ENCODE measurements at regions of chr12 and their contacts with region 1.

Region 1: GRCh38 chr12:10721651-10722501 is 1.2 kb downstream of the YBX3 start:
- DNase-seq: peak; percentile 98 to 99
- ATAC-seq: peak; percentile 69 to 72
- H3K4me3 ChIP-seq: peak overlapping the region; percentile 83 to 99 (median 88)
- H3K27ac ChIP-seq: peak overlapping the region; percentile 97 to 100 (median 98)
- H3K4me1 ChIP-seq: peaks cover 14 to 30% of the 10 kb centered on the region in 2 donors
- H3K27me3 ChIP-seq: no peaks in the 10 kb centered on the region
- CTCF ChIP-seq: no peak
- POLR2A ChIP-seq: peak; percentile 72 to 86

Region 2: GRCh38 chr12:10212201-10213131 is 509.4 kb before region 1 on chr12 and contains the start of gene GABARAPL1:
- in situ Hi-C with region 1: loop called in 3 of 4 experiments (anchors 5 to 25 kb)
- intact Hi-C with region 1: loop called (anchors 1 kb)
- DNase-seq: peak; percentile 97 to 99
- ATAC-seq: peak; percentile 85 to 86
- H3K4me3 ChIP-seq: peak within 1 kb of the TSS; percentile 75 to 96 (median 88)
- H3K27ac ChIP-seq: peak within 1 kb of the TSS; percentile 98 to 100 (median 98)
- H3K4me1 ChIP-seq: peaks cover 15 to 22% of the 10 kb centered on the region in 2 donors
- H3K27me3 ChIP-seq: no peaks in the 10 kb centered on the region
- CTCF ChIP-seq: no peak
- POLR2A ChIP-seq: peak; percentile 80 to 93
- total RNA-seq, gene GABARAPL1: 144 to 605 (median 175) TPM

Region 3: GRCh38 chr12:10613349-10614055 is 108.4 kb before region 1 on chr12 and contains the start of gene MAGOHB:
- in situ Hi-C with region 1: no loop called
- intact Hi-C with region 1: loop called (anchors 10 kb)
- DNase-seq: peak; percentile 82 to 93
- ATAC-seq: peak; percentile 98 to 99
- H3K4me3 ChIP-seq: peak within 1 kb of the TSS; percentile 68 to 89 (median 79)
- H3K27ac ChIP-seq: peak within 1 kb of the TSS; percentile 90 to 91 (median 90)
- H3K4me1 ChIP-seq: peaks cover 12 to 16% of the 10 kb centered on the region in 2 donors
- H3K27me3 ChIP-seq: no peaks in the 10 kb centered on the region
- CTCF ChIP-seq: peak in 2 of 5 experiments; percentile 49 to 52
- POLR2A ChIP-seq: peak; percentile 51 to 82
- total RNA-seq, gene MAGOHB: 0.80 to 6.3 (median 3.8) TPM

Region 4: GRCh38 chr12:10968765-10969456 is 247.0 kb after region 1 on chr12:
- in situ Hi-C with region 1: no loop called
- intact Hi-C with region 1: no loop called
- DNase-seq: peak in 1 of 2 donors; percentile 16
- ATAC-seq: peak in 1 of 2 donors; percentile 61
- H3K4me3 ChIP-seq: no peak overlapping the region
- H3K27ac ChIP-seq: no peak overlapping the region
- H3K4me1 ChIP-seq: peaks cover 4 to 5% of the 10 kb centered on the region in 2 donors
- H3K27me3 ChIP-seq: no peaks in the 10 kb centered on the region
- CTCF ChIP-seq: no peak
- POLR2A ChIP-seq: no peak

Region 5: GRCh38 chr12:11648831-11649702 is 927.2 kb after region 1 on chr12 and contains the start of gene ETV6:
- in situ Hi-C with region 1: no loop called
- intact Hi-C with region 1: loop called (anchors 5 kb)
- DNase-seq: peak; percentile 60 to 61
- ATAC-seq: peak; percentile 80 to 81
- H3K4me3 ChIP-seq: peak within 1 kb of the TSS; percentile 92 to 96 (median 92)
- H3K27ac ChIP-seq: peak within 1 kb of the TSS; percentile 84 to 97 (median 92)
- H3K4me1 ChIP-seq: peaks cover 32 to 37% of the 10 kb centered on the region in 2 donors
- H3K27me3 ChIP-seq: no peaks in the 10 kb centered on the region
- CTCF ChIP-seq: peak in 1 of 5 experiments; percentile 16
- POLR2A ChIP-seq: peak; percentile 47 to 71
- total RNA-seq, gene ETV6: 2.8 to 5.9 (median 3.3) TPM

Region 6: DNA sequence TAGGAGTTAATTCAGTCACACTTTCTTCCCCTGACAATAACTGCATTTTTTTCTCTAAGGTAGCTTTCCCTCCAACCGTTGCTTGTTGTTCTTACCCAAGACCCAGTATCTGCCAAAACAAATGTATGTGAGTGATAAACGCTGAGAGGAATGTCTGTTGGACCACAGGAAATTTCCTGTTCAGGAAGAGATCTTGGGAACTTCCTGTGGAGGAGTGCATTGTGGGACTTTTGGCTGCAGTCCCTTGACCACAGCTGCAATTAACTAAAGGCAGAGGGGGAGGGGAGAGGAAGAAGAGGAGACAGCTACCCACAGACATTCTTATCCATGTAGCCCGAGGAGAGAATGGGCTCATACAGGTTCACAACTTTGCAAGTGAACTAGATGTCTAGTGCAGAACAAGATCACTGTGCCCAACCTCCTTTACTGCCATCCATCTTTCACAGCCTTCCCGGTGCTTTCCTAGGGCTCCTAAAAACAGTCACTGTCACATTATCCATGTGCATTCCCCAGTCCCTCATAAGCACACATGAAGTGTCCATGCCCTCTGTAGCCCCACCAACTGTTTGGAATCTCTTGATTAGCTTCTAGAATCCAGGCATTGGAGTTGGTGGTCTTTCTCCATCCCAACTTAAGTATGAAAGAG is 1077.1 kb after region 1 on chr12:
- in situ Hi-C with region 1: loop called in 1 of 4 experiments (anchors 25 kb)
- intact Hi-C with region 1: no loop called
- DNase-seq: no peak
- ATAC-seq: no peak
- H3K4me3 ChIP-seq: no peak overlapping the region
- H3K27ac ChIP-seq: peak overlapping the region in 1 of 4 donors; percentile 85
- H3K4me1 ChIP-seq: peaks cover 45 to 46% of the 10 kb centered on the region in 2 donors
- H3K27me3 ChIP-seq: no peaks in the 10 kb centered on the region
- CTCF ChIP-seq: no peak
- POLR2A ChIP-seq: no peak

Region 7: GRCh38 chr12:12716793-12717585 is 1995.1 kb after region 1 on chr12 and contains the start of gene CDKN1B:
- in situ Hi-C with region 1: no loop called
- intact Hi-C with region 1: loop called (anchors 5 kb)
- DNase-seq: peak; percentile 86 to 91
- ATAC-seq: peak; percentile 84 to 86
- H3K4me3 ChIP-seq: peak within 1 kb of the TSS; percentile 72 to 99 (median 92)
- H3K27ac ChIP-seq: peak within 1 kb of the TSS; percentile 96 to 99 (median 98)
- H3K4me1 ChIP-seq: peaks cover 50 to 60% of the 10 kb centered on the region in 2 donors
- H3K27me3 ChIP-seq: no peaks in the 10 kb centered on the region
- CTCF ChIP-seq: peak in 1 of 5 experiments; percentile 5
- POLR2A ChIP-seq: peak; percentile 81 to 92
- total RNA-seq, gene CDKN1B: 43.6 to 76.4 (median 56.6) TPM

Measured in gastrocnemius medialis (tissue), 4 donors.